HepG2 (cell line): ENCODE measurements at regions of chr7 and their contacts with region 1.

Region 1: DNA sequence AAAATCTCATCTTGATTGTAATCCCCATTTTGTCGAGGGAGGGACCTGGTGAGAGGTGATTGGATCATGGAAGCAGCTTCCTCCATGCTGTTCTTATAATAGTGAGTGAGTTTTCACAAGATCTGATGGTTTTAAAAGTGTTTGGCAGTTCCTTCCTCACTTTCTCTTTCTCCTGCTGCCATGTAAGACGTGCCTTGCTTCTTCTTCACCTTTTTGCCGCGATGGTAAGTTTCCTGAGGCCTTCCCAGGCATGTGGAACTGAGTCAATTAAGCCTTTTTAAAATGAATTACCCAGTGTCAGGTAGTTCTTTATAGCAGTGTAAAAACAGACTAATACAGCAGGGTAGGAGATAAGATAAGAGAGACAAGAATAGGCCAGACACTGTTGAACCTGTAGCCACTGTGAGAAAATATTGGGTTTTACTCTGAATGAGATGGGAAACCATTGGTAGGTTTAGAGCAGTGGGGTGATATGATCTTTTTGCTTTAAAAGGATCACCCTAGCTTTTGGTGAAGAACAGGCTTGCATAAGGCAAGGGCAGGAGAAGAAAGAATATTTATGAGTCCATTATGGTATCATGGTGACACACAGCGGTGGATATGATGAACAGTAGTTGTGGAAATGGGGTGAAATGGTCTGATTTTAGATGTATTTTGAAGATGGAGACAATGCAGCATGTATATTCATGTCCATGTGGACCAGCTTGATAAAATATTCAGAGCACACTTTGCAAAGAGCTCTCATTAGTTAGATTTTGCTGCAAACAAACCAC is 11.5 kb downstream of the OR6B1 start:
- DNase-seq: peak; percentile 51
- ATAC-seq: peak; percentile 93
- H3K4me3 ChIP-seq: no peak overlapping the region
- H3K27ac ChIP-seq: no peak overlapping the region
- H3K4me1 ChIP-seq: peaks cover 10% of the 10 kb centered on the region
- H3K27me3 ChIP-seq: no peaks in the 10 kb centered on the region
- CTCF ChIP-seq: peak; percentile 81
- EP300 ChIP-seq: no peak
- POLR2A ChIP-seq: no peak
- RAD21 ChIP-seq: peak; percentile 57

Region 2: DNA sequence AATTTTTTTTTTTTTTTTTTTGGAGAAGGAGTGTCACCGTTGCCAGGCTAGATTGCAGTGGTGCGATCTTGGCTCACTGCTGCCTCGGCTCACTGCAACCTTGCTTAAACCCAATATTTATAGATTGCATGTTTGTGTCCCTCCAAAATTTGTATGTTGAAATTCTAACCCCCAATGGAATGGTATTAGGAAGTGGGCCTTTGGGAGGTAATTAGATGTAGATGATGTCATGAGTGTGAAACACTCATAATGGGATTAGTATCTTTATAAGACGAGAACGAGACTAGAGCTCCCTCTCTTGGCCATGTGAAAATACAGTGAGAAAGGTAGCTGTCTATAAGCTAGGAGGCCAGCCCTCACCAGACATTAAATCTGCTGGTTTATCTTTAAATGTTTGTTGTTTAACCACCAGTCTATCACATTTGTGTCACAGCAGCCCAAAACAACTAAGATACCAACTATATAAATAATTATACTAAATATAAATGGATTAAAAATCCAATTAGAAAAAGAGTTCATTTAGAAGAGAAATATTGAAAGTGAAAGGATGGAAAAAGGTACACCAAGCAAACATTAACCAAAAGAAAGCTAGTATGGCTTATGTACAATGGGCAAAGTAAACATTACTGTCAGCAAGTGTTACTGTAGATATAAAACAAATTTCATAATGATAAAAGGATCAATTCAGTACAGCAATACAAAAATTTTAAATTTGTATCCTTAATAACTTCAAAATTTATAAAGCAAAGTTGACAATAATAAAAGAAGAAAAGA is 118.9 kb before region 1 on chr7:
- CTCF ChIA-PET with region 1: interaction called, 4 read pairs
- POLR2A ChIA-PET with region 1: no interaction called
- in situ Hi-C with region 1: no loop called
- intact Hi-C with region 1: loop called (anchors 1 kb)
- DNase-seq: peak; percentile 68
- ATAC-seq: peak; percentile 96
- H3K4me3 ChIP-seq: peak overlapping the region in 1 of 3 experiments; percentile 26; a peak in 2 of 6 replicates
- H3K27ac ChIP-seq: peak overlapping the region; percentile 40
- H3K4me1 ChIP-seq: peaks cover 34% of the 10 kb centered on the region
- H3K27me3 ChIP-seq: no peaks in the 10 kb centered on the region
- CTCF ChIP-seq: peak; percentile 78
- EP300 ChIP-seq: no peak
- POLR2A ChIP-seq: no peak
- RAD21 ChIP-seq: peak; percentile 60

Region 3: DNA sequence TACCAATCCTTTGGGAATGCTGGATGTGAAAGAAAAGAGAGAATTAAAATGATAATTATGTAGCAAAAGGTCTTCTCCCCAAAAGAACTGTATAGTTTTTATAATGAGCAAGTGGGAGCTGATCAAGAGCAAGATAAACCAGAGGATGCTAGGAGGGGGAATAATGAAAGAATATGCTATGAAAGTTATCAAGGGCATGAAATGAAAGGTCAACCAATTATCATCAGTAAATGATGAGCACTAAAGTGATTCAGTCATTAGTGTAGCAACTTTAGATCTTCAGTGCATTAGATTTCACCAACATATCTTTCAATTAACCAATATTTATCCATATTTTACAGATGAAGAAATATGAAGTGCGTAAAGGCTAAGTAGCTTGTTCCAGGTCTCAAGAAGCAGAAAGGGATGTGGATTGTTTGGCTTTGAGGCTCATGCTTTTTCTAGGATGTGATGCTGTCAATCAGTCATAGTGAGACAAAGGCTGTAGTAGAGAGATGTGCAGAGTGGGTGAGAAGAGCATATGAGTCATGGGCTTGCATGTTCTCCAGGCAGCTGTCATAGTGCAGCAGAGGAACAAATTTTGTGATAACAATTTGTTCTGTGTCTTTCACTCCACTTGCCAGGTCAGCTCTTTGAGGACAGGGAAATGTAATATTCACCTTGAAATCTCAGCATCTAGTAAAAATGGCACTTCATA is 82.3 kb before region 1 on chr7:
- CTCF ChIA-PET with region 1: no interaction called
- POLR2A ChIA-PET with region 1: no interaction called
- in situ Hi-C with region 1: no loop called
- intact Hi-C with region 1: no loop called
- DNase-seq: no peak
- ATAC-seq: no peak; the same call in 2 of the 3 replicates
- H3K4me3 ChIP-seq: no peak overlapping the region
- H3K27ac ChIP-seq: no peak overlapping the region
- H3K4me1 ChIP-seq: peaks cover 6% of the 10 kb centered on the region
- H3K27me3 ChIP-seq: no peaks in the 10 kb centered on the region
- CTCF ChIP-seq: no peak
- EP300 ChIP-seq: no peak
- POLR2A ChIP-seq: no peak
- RAD21 ChIP-seq: no peak

Region 4: GRCh38 chr7:143979205-143979758 is 32.4 kb before region 1 on chr7:
- CTCF ChIA-PET with region 1: no interaction called
- POLR2A ChIA-PET with region 1: no interaction called
- in situ Hi-C with region 1: no loop called
- intact Hi-C with region 1: loop called (anchors 5 kb)
- DNase-seq: peak; percentile 35
- ATAC-seq: no peak
- H3K4me3 ChIP-seq: no peak overlapping the region
- H3K27ac ChIP-seq: no peak overlapping the region
- H3K4me1 ChIP-seq: peaks cover 14% of the 10 kb centered on the region
- H3K27me3 ChIP-seq: no peaks in the 10 kb centered on the region
- CTCF ChIP-seq: no peak
- EP300 ChIP-seq: no peak
- POLR2A ChIP-seq: no peak
- RAD21 ChIP-seq: no peak

Region 5: GRCh38 chr7:144098776-144099175 is 87.1 kb after region 1 on chr7:
- CTCF ChIA-PET with region 1: no interaction called
- POLR2A ChIA-PET with region 1: no interaction called
- in situ Hi-C with region 1: no loop called
- intact Hi-C with region 1: no loop called
- DNase-seq: no peak
- ATAC-seq: no peak
- H3K4me3 ChIP-seq: no peak overlapping the region
- H3K27ac ChIP-seq: no peak overlapping the region
- H3K4me1 ChIP-seq: no peaks in the 10 kb centered on the region
- H3K27me3 ChIP-seq: no peaks in the 10 kb centered on the region
- CTCF ChIP-seq: no peak
- EP300 ChIP-seq: no peak
- POLR2A ChIP-seq: no peak
- RAD21 ChIP-seq: no peak